ENCODE measurements at regions of chr17 and their contacts with region 1.

Region 1: GRCh38 chr17:78421484-78422266 is 43.2 kb downstream of the PGS1 start:
- DNase-seq: peak; percentile 91 to 95
- ATAC-seq: peak; percentile 79 to 87
- H3K4me3 ChIP-seq: no peak overlapping the region
- H3K27ac ChIP-seq: peak overlapping the region; percentile 61 to 78
- H3K4me1 ChIP-seq: peaks cover 38% of the 10 kb centered on the region
- CTCF ChIP-seq: peak; percentile 98
- EP300 ChIP-seq: peak in 1 of 2 experiments; percentile 63; a peak in 2 of 5 replicates
- POLR2A ChIP-seq: no peak
- RAD21 ChIP-seq: peak; percentile 95 to 99

Region 2: GRCh38 chr17:78013683-78014467 is 407.8 kb before region 1 on chr17:
- CTCF ChIA-PET with region 1: no interaction called
- POLR2A ChIA-PET with region 1: no interaction called
- DNase-seq: peak; percentile 56 to 73
- ATAC-seq: peak; percentile 90 to 91
- H3K4me3 ChIP-seq: no peak overlapping the region
- H3K27ac ChIP-seq: no peak overlapping the region
- H3K4me1 ChIP-seq: no peaks in the 10 kb centered on the region
- CTCF ChIP-seq: peak; percentile 98
- EP300 ChIP-seq: no peak
- POLR2A ChIP-seq: no peak
- RAD21 ChIP-seq: peak; percentile 96 to 97

Region 3: GRCh38 chr17:78272181-78272913 is 149.3 kb before region 1 on chr17:
- CTCF ChIA-PET with region 1: interaction called, 11 read pairs
- POLR2A ChIA-PET with region 1: no interaction called
- DNase-seq: peak in 1 of 2 experiments; percentile 81
- ATAC-seq: peak; percentile 59 to 75
- H3K4me3 ChIP-seq: no peak overlapping the region
- H3K27ac ChIP-seq: peak overlapping the region in 1 of 2 experiments; percentile 40; a peak in 1 of 6 replicates
- H3K4me1 ChIP-seq: peaks cover 39% of the 10 kb centered on the region
- CTCF ChIP-seq: no peak
- EP300 ChIP-seq: no peak
- POLR2A ChIP-seq: no peak
- RAD21 ChIP-seq: no peak

Region 4: DNA sequence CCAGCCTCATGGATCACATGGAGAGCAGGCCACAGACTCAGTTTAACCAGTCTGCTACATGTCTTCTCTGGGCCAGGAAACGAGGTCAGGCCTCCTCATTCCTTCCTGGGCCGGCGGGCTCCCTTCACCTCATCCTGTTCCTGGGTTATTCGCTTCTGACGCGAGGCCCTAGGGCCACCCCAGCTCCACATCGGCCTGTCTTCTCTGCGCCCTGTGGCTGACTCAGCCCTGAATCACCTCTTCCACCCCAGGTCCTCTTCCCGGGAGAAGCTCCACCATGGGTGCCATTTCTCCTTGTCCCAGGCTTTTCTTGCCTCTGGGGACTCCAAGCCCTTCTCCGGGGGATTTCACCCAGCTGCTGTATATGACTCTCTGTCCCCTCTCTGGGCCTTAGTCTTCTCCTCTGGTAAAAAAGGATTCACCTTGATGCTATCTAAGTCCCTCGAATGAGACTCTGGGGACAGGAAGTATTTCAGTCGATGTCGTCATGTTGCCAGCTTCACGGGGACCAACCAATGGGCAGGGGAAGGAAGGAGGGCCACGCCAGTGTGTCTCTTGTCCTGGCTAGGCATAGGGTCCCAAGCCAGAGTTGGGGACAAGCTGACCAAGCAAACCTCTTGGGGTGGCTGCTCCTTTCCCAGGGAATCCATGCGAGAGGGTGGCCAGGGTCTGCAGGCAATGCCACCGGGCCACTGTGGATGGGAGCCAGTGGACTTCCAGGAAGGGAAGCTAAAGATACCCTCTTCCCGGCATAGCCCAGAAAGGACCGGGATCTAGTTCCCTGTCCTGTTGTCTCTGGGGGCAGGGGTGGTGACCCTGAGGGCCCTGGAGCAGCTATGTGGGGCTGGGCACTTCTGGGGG is 120.5 kb before region 1 on chr17:
- CTCF ChIA-PET with region 1: interaction called, 16 read pairs
- POLR2A ChIA-PET with region 1: no interaction called
- DNase-seq: peak in 1 of 2 experiments; percentile 39
- ATAC-seq: peak; percentile 32 to 64; a peak in 3 of 6 replicates
- H3K4me3 ChIP-seq: no peak overlapping the region
- H3K27ac ChIP-seq: peak overlapping the region; percentile 13 to 38; a peak in 5 of 6 replicates
- H3K4me1 ChIP-seq: peaks cover 17% of the 10 kb centered on the region
- CTCF ChIP-seq: no peak
- EP300 ChIP-seq: no peak
- POLR2A ChIP-seq: no peak
- RAD21 ChIP-seq: no peak

Region 5: GRCh38 chr17:78313735-78314648 is 107.7 kb before region 1 on chr17:
- CTCF ChIA-PET with region 1: interaction called, 45 read pairs
- POLR2A ChIA-PET with region 1: no interaction called
- DNase-seq: peak; percentile 95 to 98
- ATAC-seq: peak; percentile 63 to 72
- H3K4me3 ChIP-seq: peak overlapping the region; percentile 42
- H3K27ac ChIP-seq: peak overlapping the region; percentile 94 to 95
- H3K4me1 ChIP-seq: peaks cover 57% of the 10 kb centered on the region
- CTCF ChIP-seq: no peak; the same call in 2 of the 3 replicates
- EP300 ChIP-seq: peak; percentile 31 to 57; a peak in 2 of 5 replicates
- POLR2A ChIP-seq: peak; percentile 64
- RAD21 ChIP-seq: peak in 1 of 2 experiments; percentile 50; a peak in 4 of 5 replicates

Region 6: GRCh38 chr17:78378225-78379130 is 43.2 kb before region 1 on chr17 and contains the start of gene PGS1:
- CTCF ChIA-PET with region 1: interaction called, 47 read pairs
- POLR2A ChIA-PET with region 1: interaction called, 3 read pairs
- DNase-seq: peak; percentile 76 to 81
- ATAC-seq: peak; percentile 78 to 85
- H3K4me3 ChIP-seq: peak within 1 kb of the TSS; percentile 91
- H3K27ac ChIP-seq: peak within 1 kb of the TSS; percentile 88 to 90
- H3K4me1 ChIP-seq: peaks cover 52% of the 10 kb centered on the region
- CTCF ChIP-seq: no peak
- EP300 ChIP-seq: no peak
- POLR2A ChIP-seq: peak; percentile 91
- RAD21 ChIP-seq: no peak; a peak in 1 of 5 replicates
- polyA plus RNA-seq, gene PGS1: 29.5 and 29.6 TPM in 2 replicates

Region 7: GRCh38 chr17:78397681-78398101 is 24.0 kb before region 1 on chr17:
- CTCF ChIA-PET with region 1: interaction called, 30 read pairs
- POLR2A ChIA-PET with region 1: no interaction called
- DNase-seq: no peak
- ATAC-seq: no peak
- H3K4me3 ChIP-seq: no peak overlapping the region
- H3K27ac ChIP-seq: no peak overlapping the region
- H3K4me1 ChIP-seq: peaks cover 1% of the 10 kb centered on the region; the same call in 1 of the 3 replicates
- CTCF ChIP-seq: no peak
- EP300 ChIP-seq: no peak
- POLR2A ChIP-seq: no peak
- RAD21 ChIP-seq: no peak

Region 8: GRCh38 chr17:78442648-78443128 is 21.0 kb after region 1 on chr17:
- CTCF ChIA-PET with region 1: interaction called, 67 read pairs
- POLR2A ChIA-PET with region 1: no interaction called
- DNase-seq: no peak
- ATAC-seq: no peak
- H3K4me3 ChIP-seq: no peak overlapping the region
- H3K27ac ChIP-seq: no peak overlapping the region
- H3K4me1 ChIP-seq: 0 out of 3 replicates have a peak, but pooled peaks cover 3% of the 10 kb centered on the region
- CTCF ChIP-seq: no peak
- EP300 ChIP-seq: no peak
- POLR2A ChIP-seq: no peak
- RAD21 ChIP-seq: no peak

Region 9: DNA sequence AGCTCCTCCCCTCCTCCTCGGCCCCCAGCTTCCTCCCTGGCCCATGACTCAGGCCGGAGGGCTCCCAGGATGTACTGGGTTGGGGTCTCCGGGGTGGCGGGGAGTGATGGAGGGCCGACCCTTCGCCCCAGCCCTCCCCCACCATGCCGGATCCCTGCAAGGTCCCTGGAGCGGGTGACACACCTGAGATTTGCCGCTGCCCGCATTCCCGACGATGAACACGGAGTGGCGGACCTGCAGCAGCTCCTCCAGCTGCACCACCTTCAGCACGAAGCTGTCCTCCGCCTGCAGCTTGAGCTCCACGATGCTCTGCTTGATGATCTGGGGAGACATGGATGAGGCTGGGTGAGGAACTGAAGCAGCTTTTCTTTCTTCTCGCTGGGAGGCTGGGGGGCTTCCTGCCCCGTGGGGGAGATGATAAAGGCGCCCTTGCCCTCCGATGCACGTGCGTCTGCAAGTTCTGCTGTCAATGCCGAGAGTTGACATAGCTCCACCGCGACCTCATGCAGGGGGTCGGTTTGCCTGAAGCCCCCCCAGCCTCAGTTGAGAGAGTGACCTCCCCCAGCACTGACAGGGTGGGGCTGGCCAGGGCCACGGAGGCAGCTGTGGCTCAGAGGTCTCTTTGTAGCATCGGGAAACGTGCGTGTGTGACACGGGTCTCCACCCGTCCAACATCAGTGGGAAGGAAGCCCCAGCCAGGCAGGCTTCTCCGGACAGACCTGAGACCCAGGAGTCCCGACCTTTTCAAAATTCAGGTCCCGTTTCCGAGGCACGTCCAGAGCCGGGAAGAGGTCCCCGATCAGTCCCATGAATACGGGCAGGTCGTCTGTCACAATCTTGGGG is 72.4 kb after region 1 on chr17:
- CTCF ChIA-PET with region 1: no interaction called
- POLR2A ChIA-PET with region 1: no interaction called
- DNase-seq: no peak
- ATAC-seq: no peak
- H3K4me3 ChIP-seq: no peak overlapping the region
- H3K27ac ChIP-seq: peak overlapping the region in 1 of 2 experiments; percentile 53; a peak in 2 of 6 replicates
- H3K4me1 ChIP-seq: peaks cover 28% of the 10 kb centered on the region
- CTCF ChIP-seq: no peak
- EP300 ChIP-seq: no peak
- POLR2A ChIP-seq: no peak
- RAD21 ChIP-seq: no peak